ENCODE measurements at regions of chr17 and their contacts with region 1.

Region 1: GRCh38 chr17:9968902-9969617 is 64.0 kb upstream of the RCVRN start:
- DNase-seq: no peak
- CTCF ChIP-seq: no peak

Region 2: GRCh38 chr17:9456330-9456729 is 512.7 kb before region 1 on chr17:
- in situ Hi-C with region 1: no loop called
- DNase-seq: peak; percentile 37
- CTCF ChIP-seq: no peak

Region 3: DNA sequence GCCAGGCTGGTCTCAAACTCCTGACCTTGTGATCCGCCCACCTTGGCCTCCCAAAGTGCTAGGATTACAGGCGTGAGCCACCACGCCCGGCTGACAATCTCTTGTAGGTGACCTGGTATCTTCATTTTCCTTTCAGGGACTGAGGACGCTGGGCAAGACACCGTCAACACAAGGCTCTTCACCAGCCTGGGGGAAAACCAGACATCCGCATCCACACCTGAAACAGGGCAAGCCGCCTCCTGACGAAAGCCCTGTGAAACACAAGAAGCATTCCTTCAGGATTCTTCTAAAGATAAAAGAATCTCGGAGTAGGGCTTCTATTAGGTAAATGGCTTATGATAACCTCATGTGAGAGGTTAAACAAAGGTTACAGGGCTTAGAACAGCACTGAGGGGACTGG is 226.0 kb before region 1 on chr17:
- in situ Hi-C with region 1: no loop called
- DNase-seq: no peak
- CTCF ChIP-seq: no peak

Region 4: DNA sequence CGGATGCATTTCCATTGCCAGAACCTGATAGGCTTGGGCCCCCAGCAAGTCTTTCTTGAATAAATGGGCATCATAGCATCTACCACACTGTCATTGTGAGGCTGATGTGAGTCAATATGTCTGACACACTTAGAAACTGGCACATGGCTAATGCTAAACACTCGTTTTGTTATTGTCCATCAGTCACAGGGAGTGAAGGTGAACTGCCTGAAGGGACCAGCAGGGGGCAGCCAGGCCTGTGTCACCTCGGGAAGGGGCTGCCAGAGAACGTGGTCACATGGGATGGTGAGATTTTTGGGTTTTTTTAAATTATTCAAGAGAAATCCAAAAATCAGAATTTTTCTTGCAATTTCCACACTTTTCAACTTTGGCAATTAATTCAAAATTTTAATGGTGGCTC is 63.2 kb before region 1 on chr17:
- in situ Hi-C with region 1: loop called (anchors 10 kb)
- DNase-seq: peak; percentile 79
- CTCF ChIP-seq: peak; percentile 52

Region 5: DNA sequence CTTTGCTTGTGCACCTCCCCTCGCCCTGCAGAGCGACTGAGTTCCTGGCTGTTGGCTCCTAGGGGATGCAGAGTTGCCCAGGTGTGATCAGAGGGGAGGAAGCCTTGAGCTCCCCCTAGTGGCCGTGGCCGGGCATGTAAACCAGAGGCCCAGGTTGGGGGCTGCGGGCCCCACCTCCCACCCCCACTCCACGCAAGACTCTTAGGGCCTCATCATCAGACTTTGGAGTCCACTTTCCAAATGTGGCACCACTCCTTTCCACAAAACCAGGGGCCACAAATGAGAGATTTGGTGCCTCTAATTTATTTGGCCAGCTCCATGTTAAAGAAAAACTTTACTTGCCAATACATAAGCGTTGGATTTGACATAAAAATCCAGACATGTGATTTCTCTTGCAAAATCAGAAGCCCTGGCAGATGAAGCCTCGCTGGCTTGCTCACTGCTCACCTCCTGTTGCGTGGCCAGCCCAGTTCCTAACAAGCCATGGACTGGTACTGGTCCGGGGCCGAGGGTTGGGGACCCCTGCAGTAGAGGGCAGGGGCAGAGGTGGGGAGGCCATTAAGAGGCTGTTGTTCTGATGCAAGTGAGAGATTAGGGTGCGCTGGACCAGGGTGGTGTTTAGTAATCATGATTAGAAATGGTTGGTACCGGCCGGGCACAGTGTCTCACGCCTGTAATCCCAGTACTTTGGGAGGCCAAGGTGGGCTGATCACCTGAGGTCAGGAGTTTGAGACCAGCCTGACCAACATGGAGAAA is 258.0 kb after region 1 on chr17:
- in situ Hi-C with region 1: loop called (anchors 10 kb)
- DNase-seq: peak; percentile 86
- CTCF ChIP-seq: peak; percentile 75